Activated CD4-positive, alpha-beta memory T cell treated with anti-CD3 and anti-CD28 coated beads, Interleukin-2, amount 10 ng/mL, durations not matched to agents 7 days and 5 days (primary cell): ENCODE measurements at regions of chr9 and their contacts with region 1.

Region 1: DNA sequence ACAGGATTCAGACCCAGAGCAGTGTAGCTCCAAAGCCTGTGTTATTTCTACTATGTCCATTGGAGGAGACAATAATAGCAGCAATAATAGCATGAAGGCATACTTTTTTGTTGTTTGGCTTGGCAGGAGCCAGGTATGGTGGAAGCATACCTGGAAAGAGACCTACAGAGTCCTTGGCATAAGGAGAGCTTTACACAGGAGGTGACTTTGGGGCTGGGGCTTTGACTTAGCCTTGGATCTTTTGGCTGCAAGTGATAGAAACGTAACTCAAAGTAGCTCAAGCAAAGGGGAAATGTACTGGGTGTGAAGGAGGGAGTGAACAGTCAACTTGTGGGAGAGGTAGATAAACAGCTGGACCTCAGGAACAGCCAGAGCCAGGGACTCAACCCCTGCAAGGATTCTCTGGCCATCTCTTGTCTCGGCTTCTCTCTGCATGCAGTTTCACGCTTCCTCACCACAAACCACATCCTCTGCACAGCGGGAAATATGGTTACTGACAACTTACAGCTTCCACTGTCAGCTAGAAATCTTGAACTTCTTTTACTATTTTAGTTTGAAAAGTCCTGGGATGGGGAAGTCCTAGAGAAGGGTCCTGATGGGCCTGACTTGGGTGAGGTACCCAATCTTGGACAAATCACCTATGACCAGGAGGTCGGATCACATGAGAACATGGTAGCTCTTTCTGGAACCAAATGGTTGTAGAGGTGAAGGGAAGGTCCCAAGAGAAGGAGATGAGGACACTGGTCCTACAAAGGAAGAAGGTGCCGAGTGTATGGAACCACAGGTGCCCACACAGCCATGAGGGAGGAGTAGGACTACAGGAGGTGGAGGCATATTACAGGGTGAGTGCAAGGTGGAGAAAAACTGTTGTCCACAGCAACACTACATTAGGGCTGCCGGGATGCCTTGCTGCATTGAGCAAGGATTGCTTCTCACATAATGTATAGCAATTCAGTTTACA is 47.0 kb upstream of the TGFBR1 start:
- DNase-seq: peak; percentile 92
- H3K4me3 Mint-ChIP-seq: peak overlapping the region; percentile 72
- H3K27ac Mint-ChIP-seq: peak overlapping the region; percentile 97
- H3K4me1 Mint-ChIP-seq: peaks cover 65% of the 10 kb centered on the region
- H3K27me3 Mint-ChIP-seq: peaks cover 3% of the 10 kb centered on the region

Region 2: DNA sequence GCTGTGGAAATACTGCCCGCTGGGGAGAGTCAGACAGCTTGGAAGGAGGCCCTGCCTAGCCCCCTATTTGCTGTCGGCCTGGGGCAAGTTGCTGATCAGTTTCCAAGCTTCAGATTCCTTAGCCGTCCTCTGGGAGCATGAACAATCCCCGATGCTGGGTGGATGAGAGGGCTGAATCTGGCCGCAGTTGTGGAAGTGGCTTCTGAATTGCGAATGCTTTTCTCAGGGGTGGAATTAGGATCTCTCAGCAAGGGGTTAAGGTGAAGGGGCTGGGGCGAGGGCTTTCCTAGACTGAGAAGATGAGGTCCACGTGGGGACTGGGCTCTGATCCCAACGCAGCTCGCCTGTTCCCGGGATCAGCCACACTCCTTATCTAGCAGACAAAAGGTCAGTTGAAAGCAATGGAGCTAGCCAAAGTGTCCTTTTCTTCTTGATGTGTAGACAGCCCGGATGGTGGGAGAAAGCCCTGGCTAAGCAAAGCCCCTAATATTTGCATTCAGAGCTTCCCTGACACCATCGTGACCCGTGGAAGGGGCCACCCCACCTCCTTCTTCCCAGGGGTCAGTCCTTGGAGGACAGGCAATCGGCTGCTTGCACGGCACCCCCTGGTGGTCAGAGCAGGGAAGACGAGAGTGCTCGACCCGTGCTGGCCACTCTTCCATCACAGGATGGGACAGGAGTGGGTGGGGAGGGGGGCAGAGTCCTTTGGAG is 59.3 kb before region 1 on chr9:
- CTCF ChIA-PET with region 1: interaction called, 10 read pairs
- POLR2A ChIA-PET with region 1: interaction called, 9 read pairs
- DNase-seq: peak; percentile 63
- H3K4me3 Mint-ChIP-seq: no peak overlapping the region
- H3K27ac Mint-ChIP-seq: no peak overlapping the region
- H3K4me1 Mint-ChIP-seq: peaks cover 24% of the 10 kb centered on the region
- H3K27me3 Mint-ChIP-seq: peaks cover 22% of the 10 kb centered on the region

Region 3: GRCh38 chr9:99026338-99027298 is 31.3 kb before region 1 on chr9:
- CTCF ChIA-PET with region 1: interaction called, 4 read pairs
- POLR2A ChIA-PET with region 1: interaction called, 16 read pairs
- DNase-seq: no peak
- H3K4me3 Mint-ChIP-seq: no peak overlapping the region
- H3K27ac Mint-ChIP-seq: peak overlapping the region; percentile 15
- H3K4me1 Mint-ChIP-seq: peaks cover 26% of the 10 kb centered on the region
- H3K27me3 Mint-ChIP-seq: peaks cover 14% of the 10 kb centered on the region

Region 4: GRCh38 chr9:99092643-99093491 is 34.9 kb after region 1 on chr9:
- CTCF ChIA-PET with region 1: interaction called, 41 read pairs
- POLR2A ChIA-PET with region 1: interaction called, 132 read pairs
- DNase-seq: peak; percentile 83
- H3K4me3 Mint-ChIP-seq: peak overlapping the region; percentile 41
- H3K27ac Mint-ChIP-seq: peak overlapping the region; percentile 100
- H3K4me1 Mint-ChIP-seq: peaks cover 68% of the 10 kb centered on the region
- H3K27me3 Mint-ChIP-seq: no peaks in the 10 kb centered on the region

Region 5: DNA sequence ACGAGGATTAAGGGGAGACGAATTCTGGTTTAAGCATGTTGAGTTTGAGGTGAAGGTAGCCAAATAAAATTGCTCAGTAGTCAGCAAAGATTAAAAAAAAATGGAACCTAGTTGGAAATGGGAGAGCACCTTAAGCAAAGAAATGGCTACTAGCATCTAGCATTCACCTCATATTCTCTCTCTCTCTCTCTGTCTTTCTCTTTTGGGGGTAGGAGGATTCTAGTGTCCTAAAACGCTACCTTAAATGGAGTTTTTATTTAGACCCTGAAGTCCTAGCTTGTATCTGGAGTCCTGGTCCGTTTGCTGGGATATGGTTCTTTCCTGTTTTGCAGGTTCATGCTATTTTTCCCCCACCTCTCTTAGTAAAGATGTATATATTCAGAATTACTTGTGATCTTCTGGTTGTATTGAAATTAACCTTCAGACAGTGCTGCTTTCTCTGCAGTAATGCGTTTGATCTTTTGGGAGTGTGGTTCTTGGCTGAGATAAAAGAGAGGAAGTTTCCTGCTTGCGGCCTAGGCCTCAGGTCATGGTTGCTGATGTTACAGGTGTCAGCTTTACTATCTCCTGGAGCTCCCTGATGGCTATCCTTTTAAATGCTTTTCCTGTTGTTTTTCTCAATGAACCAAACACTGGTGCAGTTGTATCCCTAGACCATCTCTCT is 54.9 kb after region 1 on chr9:
- CTCF ChIA-PET with region 1: interaction called, 3 read pairs
- POLR2A ChIA-PET with region 1: interaction called, 108 read pairs
- DNase-seq: peak; percentile 44
- H3K4me3 Mint-ChIP-seq: peak overlapping the region; percentile 31
- H3K27ac Mint-ChIP-seq: peak overlapping the region; percentile 55
- H3K4me1 Mint-ChIP-seq: peaks cover 77% of the 10 kb centered on the region
- H3K27me3 Mint-ChIP-seq: no peaks in the 10 kb centered on the region

Region 6: DNA sequence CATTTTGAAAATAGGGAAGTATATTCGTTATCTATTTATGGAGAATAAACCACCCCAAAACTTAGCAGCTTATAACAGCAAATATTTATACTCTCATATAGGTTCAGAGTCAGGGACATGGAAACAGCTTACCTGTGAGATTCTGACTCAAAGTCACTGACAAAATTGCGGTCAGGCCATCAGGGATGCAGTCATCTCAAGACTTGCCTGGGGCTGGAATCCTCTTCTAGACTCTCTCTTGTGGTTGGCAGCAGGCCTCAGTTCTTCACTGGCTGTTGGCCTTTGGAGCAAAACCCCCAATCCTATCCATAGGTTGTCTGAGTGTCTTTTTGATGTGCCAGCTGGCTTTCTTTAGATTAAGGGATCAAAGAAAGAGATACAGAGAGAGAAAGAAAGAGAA is 439.7 kb after region 1 on chr9:
- CTCF ChIA-PET with region 1: no interaction called
- POLR2A ChIA-PET with region 1: no interaction called
- DNase-seq: no peak
- H3K4me3 Mint-ChIP-seq: no peak overlapping the region
- H3K27ac Mint-ChIP-seq: no peak overlapping the region
- H3K4me1 Mint-ChIP-seq: no peaks in the 10 kb centered on the region
- H3K27me3 Mint-ChIP-seq: peaks cover 18% of the 10 kb centered on the region